ENCODE measurements at regions of chr14 and their contacts with region 1.

Region 1: GRCh38 chr14:33343009-33343408 is 404.3 kb downstream of the NPAS3 start:
- DNase-seq: no peak
- ATAC-seq: no peak
- H3K4me3 ChIP-seq: no peak overlapping the region
- H3K4me3 Mint-ChIP-seq: no peak overlapping the region
- H3K27ac ChIP-seq: no peak overlapping the region
- H3K27ac Mint-ChIP-seq: no peak overlapping the region
- H3K4me1 ChIP-seq: no peaks in the 10 kb centered on the region
- H3K4me1 Mint-ChIP-seq: no peaks in the 10 kb centered on the region
- H3K27me3 ChIP-seq: no peaks in the 10 kb centered on the region
- H3K27me3 Mint-ChIP-seq: peaks cover 0 to 2% of the 10 kb centered on the region in 2 donors

Region 2: GRCh38 chr14:33249233-33249820 is 93.7 kb before region 1 on chr14:
- CTCF ChIA-PET with region 1: no interaction called
- POLR2A ChIA-PET with region 1: no interaction called
- DNase-seq: no peak
- ATAC-seq: no peak
- H3K4me3 ChIP-seq: no peak overlapping the region
- H3K4me3 Mint-ChIP-seq: no peak overlapping the region
- H3K27ac ChIP-seq: no peak overlapping the region
- H3K27ac Mint-ChIP-seq: no peak overlapping the region
- H3K4me1 ChIP-seq: no peaks in the 10 kb centered on the region
- H3K4me1 Mint-ChIP-seq: no peaks in the 10 kb centered on the region
- H3K27me3 ChIP-seq: peaks cover 0 to 3% of the 10 kb centered on the region in 2 experiments
- H3K27me3 Mint-ChIP-seq: no peaks in the 10 kb centered on the region

Region 3: GRCh38 chr14:33490555-33490954 is 147.5 kb after region 1 on chr14:
- CTCF ChIA-PET with region 1: no interaction called
- POLR2A ChIA-PET with region 1: no interaction called
- DNase-seq: no peak
- ATAC-seq: no peak
- H3K4me3 ChIP-seq: no peak overlapping the region
- H3K4me3 Mint-ChIP-seq: no peak overlapping the region
- H3K27ac ChIP-seq: no peak overlapping the region
- H3K27ac Mint-ChIP-seq: no peak overlapping the region
- H3K4me1 ChIP-seq: no peaks in the 10 kb centered on the region
- H3K4me1 Mint-ChIP-seq: no peaks in the 10 kb centered on the region
- H3K27me3 ChIP-seq: no peaks in the 10 kb centered on the region
- H3K27me3 Mint-ChIP-seq: peaks cover 6 to 7% of the 10 kb centered on the region in 2 donors

Region 4: GRCh38 chr14:33521192-33521591 is 178.2 kb after region 1 on chr14:
- CTCF ChIA-PET with region 1: interaction called in 1 of 2 experiments, 14 read pairs
- POLR2A ChIA-PET with region 1: no interaction called
- DNase-seq: no peak
- ATAC-seq: no peak
- H3K4me3 ChIP-seq: no peak overlapping the region
- H3K4me3 Mint-ChIP-seq: no peak overlapping the region
- H3K27ac ChIP-seq: no peak overlapping the region
- H3K27ac Mint-ChIP-seq: no peak overlapping the region
- H3K4me1 ChIP-seq: no peaks in the 10 kb centered on the region
- H3K4me1 Mint-ChIP-seq: no peaks in the 10 kb centered on the region
- H3K27me3 ChIP-seq: no peaks in the 10 kb centered on the region
- H3K27me3 Mint-ChIP-seq: peaks cover 0 to 4% of the 10 kb centered on the region in 2 donors